Activated CD4-positive, alpha-beta memory T cell treated with anti-CD3 and anti-CD28 coated beads for 36 hours (primary cell): ENCODE measurements at regions of chr13 and their contacts with region 1.

Region 1: GRCh38 chr13:79393564-79394249 is 12.3 kb downstream of the RBM26 start:
- DNase-seq: peak; percentile 38
- H3K4me3 Mint-ChIP-seq: peak overlapping the region; percentile 18
- H3K27ac Mint-ChIP-seq: peak overlapping the region; percentile 82
- H3K4me1 Mint-ChIP-seq: peaks cover 63% of the 10 kb centered on the region
- H3K27me3 Mint-ChIP-seq: no peaks in the 10 kb centered on the region

Region 2: GRCh38 chr13:78137404-78138142 is 1256.1 kb before region 1 on chr13:
- CTCF ChIA-PET with region 1: no interaction called
- POLR2A ChIA-PET with region 1: no interaction called
- intact Hi-C with region 1: loop called (anchors 5 kb)
- DNase-seq: peak; percentile 12
- H3K4me3 Mint-ChIP-seq: no peak overlapping the region
- H3K27ac Mint-ChIP-seq: no peak overlapping the region
- H3K4me1 Mint-ChIP-seq: peaks cover 3% of the 10 kb centered on the region
- H3K27me3 Mint-ChIP-seq: no peaks in the 10 kb centered on the region

Region 3: GRCh38 chr13:78658635-78659449 is 734.9 kb before region 1 on chr13 and contains the start of gene OBI1:
- CTCF ChIA-PET with region 1: no interaction called
- POLR2A ChIA-PET with region 1: no interaction called
- intact Hi-C with region 1: loop called (anchors 5 kb)
- DNase-seq: peak; percentile 93
- H3K4me3 Mint-ChIP-seq: peak within 1 kb of the TSS; percentile 97
- H3K27ac Mint-ChIP-seq: peak within 1 kb of the TSS; percentile 91
- H3K4me1 Mint-ChIP-seq: peaks cover 29% of the 10 kb centered on the region
- H3K27me3 Mint-ChIP-seq: no peaks in the 10 kb centered on the region
- total RNA-seq, gene OBI1: 17.6 TPM

Region 4: GRCh38 chr13:79194272-79194671 is 199.4 kb before region 1 on chr13:
- CTCF ChIA-PET with region 1: interaction called, 5 read pairs
- POLR2A ChIA-PET with region 1: no interaction called
- intact Hi-C with region 1: loop called (anchors 2 kb)
- DNase-seq: peak; percentile 79
- H3K4me3 Mint-ChIP-seq: no peak overlapping the region
- H3K27ac Mint-ChIP-seq: no peak overlapping the region
- H3K4me1 Mint-ChIP-seq: peaks cover 38% of the 10 kb centered on the region
- H3K27me3 Mint-ChIP-seq: no peaks in the 10 kb centered on the region

Region 5: DNA sequence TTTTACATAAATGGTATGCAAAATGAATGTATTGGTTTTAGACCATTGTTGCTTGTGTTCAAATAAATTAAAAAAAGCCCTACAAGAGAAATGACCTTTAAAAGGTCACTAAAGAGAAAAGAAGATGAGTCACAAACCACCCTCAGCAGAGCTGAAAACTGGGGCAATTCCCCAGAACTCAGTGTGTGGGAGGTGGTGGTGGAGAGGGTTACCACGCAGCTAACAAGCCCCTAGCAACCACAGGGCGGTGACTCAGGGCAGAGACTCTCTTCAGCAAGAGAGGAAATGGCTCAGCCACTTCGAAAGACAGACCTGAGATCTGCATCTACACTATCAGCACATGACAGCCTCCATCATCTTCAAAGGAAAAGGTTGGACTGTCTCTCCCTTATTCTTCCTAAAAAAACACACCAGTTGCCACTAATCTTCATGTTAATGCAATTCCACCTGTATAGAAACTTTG is 57.8 kb after region 1 on chr13:
- CTCF ChIA-PET with region 1: no interaction called
- POLR2A ChIA-PET with region 1: interaction called, 3 read pairs
- intact Hi-C with region 1: loop called (anchors 1 kb)
- DNase-seq: peak; percentile 98
- H3K4me3 Mint-ChIP-seq: peak overlapping the region; percentile 74
- H3K27ac Mint-ChIP-seq: peak overlapping the region; percentile 97
- H3K4me1 Mint-ChIP-seq: peaks cover 84% of the 10 kb centered on the region
- H3K27me3 Mint-ChIP-seq: no peaks in the 10 kb centered on the region